ENCODE measurements at regions of chr4 and their contacts with region 1.

Region 1: DNA sequence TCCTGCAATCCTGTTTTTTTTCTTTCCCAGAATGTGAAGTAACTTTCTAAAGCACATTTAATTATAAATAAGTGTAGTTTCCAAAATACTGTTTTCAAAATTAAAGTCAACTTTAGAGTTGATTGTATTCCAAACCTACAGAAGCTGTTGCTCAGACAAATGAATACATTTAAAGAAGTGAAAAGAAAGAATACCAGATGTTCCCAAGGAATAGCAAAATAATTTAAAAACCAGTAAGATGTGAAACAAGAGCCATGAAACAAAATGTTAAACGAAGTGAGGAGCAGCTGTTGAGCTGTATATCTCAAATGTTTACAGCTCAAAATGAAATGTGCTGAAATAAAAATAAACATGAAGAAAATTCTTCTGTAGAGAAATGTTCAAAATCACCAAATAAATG is 627.4 kb upstream of the NDST4 start:
- DNase-seq: no peak
- ATAC-seq: no peak
- H3K4me3 ChIP-seq: no peak overlapping the region
- H3K27ac ChIP-seq: no peak overlapping the region
- H3K4me1 ChIP-seq: no peaks in the 10 kb centered on the region
- H3K27me3 ChIP-seq: no peaks in the 10 kb centered on the region
- CTCF ChIP-seq: no peak

Region 2: GRCh38 chr4:116055857-116056827 is 315.3 kb after region 1 on chr4:
- intact Hi-C with region 1: no loop called
- DNase-seq: no peak
- ATAC-seq: no peak
- H3K4me3 ChIP-seq: no peak overlapping the region
- H3K27ac ChIP-seq: no peak overlapping the region
- H3K4me1 ChIP-seq: no peaks in the 10 kb centered on the region
- H3K27me3 ChIP-seq: no peaks in the 10 kb centered on the region
- CTCF ChIP-seq: no peak

Region 3: GRCh38 chr4:116223040-116223732 is 482.4 kb after region 1 on chr4:
- intact Hi-C with region 1: loop called (anchors 10 kb)
- DNase-seq: no peak
- ATAC-seq: no peak
- H3K4me3 ChIP-seq: no peak overlapping the region
- H3K27ac ChIP-seq: no peak overlapping the region
- H3K4me1 ChIP-seq: no peaks in the 10 kb centered on the region
- H3K27me3 ChIP-seq: no peaks in the 10 kb centered on the region
- CTCF ChIP-seq: no peak

Measured in lower lobe of right lung (tissue), 2 donors.